ENCODE measurements at regions of chr1 and their contacts with region 1.

Region 1: GRCh38 chr1:246755419-246755818 is 31.2 kb downstream of the SCCPDH start:
- DNase-seq: no peak
- H3K4me3 ChIP-seq: no peak overlapping the region
- H3K27ac ChIP-seq: no peak overlapping the region
- H3K4me1 ChIP-seq: no peaks in the 10 kb centered on the region
- H3K27me3 ChIP-seq: no peaks in the 10 kb centered on the region
- CTCF ChIP-seq: no peak
- POLR2A ChIP-seq: no peak

Region 2: DNA sequence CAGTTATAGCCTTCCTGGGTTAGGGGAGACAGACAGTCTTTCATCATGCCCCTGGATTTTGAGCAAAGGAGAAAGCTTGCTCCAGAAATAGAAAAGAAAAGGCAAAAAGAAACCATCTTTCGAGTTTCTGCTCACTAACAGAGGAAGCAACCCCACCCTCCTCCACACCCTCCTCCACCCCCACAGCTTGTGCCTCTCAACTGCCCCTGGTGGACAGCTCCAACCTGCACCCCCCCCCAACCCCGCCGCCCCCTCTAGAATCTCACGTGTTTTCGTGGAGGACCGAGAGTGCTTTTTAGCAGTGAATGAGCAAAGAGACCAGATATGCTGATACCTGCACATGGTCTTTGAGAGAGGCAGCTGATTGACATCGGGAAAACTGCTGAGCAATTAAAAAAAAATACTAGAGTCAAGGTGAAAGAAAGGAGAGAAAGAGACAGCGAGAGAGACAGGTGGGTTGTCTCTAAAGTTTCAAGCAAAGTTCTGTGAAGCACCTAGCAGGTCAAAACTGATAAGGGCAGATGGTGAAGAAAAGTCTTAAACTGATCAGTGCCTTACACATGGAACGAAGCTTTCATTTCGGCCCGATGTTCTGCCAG is 1242.3 kb before region 1 on chr1:
- intact Hi-C with region 1: loop called (anchors 5 kb)
- DNase-seq: no peak
- H3K4me3 ChIP-seq: peak overlapping the region; percentile 14 to 50 (median 19)
- H3K27ac ChIP-seq: no peak overlapping the region
- H3K4me1 ChIP-seq: no peaks in the 10 kb centered on the region
- H3K27me3 ChIP-seq: no peaks in the 10 kb centered on the region
- CTCF ChIP-seq: no peak
- POLR2A ChIP-seq: no peak

Region 3: DNA sequence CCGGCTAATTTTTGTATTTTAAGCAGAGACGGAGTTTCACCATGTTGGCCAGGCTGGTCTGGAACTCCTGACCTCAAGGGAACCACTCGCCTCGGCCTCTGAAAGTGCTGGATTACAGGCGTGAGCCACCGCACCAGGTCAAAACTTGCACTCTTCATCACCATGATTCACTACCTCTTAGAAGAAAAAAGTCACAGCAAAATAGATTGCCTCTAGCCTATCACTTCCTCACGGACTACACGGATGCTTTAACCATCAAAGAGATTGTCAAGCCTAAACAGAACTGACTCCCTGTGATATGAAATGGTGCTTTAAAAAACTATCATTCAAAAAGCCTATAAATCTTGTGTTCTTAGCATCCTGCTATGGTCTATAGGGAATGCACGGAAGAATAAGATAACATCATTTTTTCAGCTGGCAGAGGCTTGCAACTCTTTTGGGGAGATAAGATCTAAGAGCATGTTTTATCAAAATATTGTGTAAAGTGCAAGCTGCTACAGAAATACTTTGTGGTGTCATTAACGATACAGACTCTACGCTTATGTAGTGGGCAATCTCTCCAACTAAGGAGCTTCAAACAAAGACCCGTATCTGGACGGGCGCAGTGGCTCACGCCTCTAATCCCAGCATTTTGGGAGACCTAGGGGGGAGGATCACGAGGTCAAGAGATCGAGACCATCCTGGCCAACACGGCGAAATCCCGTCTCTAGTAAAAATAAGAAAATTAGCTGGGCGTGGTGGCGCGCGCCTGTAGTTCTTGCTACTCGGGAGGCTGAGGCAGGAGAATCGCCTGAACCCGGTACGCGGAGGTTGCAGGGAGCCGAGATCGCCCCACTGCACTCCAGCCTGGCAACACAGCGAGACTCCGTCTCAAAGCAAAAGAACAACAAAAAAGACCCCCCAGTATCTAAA is 190.3 kb before region 1 on chr1:
- intact Hi-C with region 1: loop called (anchors 5 kb)
- DNase-seq: no peak
- H3K4me3 ChIP-seq: peak overlapping the region; percentile 84 to 91 (median 87)
- H3K27ac ChIP-seq: peak overlapping the region; percentile 95 to 97
- H3K4me1 ChIP-seq: peaks cover 0 to 14% of the 10 kb centered on the region in 2 donors
- H3K27me3 ChIP-seq: no peaks in the 10 kb centered on the region
- CTCF ChIP-seq: no peak
- POLR2A ChIP-seq: no peak

Region 4: DNA sequence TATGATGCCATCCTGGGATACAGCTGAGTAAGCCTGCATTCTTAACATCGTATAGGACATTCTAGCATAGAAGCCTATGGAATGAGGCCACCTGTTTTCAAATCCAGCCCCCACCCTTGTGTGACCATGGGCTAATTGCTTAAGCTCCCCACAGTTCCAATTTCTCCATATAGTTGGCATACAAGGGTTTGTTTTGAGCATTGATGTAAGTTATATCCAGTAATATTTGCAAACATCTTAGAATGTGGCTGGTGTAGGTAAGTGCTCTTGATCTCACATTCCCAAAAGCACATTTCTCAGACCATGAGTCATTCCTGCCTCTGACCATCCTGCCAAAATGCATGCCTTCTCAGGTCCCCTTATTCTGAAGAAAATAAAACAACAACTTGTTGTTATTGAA is 991.1 kb after region 1 on chr1:
- intact Hi-C with region 1: no loop called
- DNase-seq: no peak
- H3K4me3 ChIP-seq: no peak overlapping the region
- H3K27ac ChIP-seq: no peak overlapping the region
- H3K4me1 ChIP-seq: no peaks in the 10 kb centered on the region
- H3K27me3 ChIP-seq: no peaks in the 10 kb centered on the region
- CTCF ChIP-seq: no peak
- POLR2A ChIP-seq: no peak

Measured in breast epithelium (tissue), 4 donors.